Panc1 (cell line): ENCODE measurements at regions of chr3 and their contacts with region 1.

Region 1: DNA sequence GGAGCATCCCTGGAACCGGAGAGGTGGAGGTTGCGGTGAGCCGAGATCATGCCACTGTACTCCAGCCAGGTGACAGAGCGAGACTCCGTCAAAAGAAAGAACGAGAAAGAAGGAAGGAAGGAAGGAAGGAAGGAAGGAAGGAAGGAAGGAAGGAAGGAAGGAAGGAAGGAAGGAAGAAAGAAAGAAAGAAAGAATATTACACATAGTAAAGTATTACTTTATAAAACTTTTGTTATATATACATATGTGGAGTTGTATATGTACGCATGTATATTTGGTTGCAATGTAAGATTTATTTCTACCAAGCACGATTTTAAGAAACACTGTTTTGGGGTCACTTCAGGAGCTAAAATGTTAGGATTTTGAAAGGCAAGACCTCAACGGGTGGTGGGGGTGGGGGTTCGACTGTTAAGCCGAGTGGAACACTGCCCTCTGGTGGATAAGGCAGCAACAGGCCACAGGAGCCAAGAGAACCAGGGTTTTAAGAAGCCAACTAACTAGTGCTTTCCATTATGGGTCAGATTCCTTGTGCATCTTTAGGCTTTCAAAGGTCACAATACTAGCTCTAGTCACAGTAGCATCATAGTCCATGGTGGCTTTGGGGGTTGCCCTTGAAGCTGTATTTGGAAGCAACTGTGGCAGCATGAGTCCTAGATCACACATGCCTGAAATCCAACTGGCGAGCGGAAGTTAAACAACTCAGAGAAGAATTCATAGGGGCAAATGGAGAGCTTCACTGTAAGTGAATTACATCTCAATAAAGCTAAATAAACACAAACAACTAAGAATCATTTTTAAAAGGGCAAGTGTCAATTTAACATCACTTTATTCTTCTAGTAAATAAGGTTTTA is 22.5 kb downstream of the GLB1 start:
- DNase-seq: peak; percentile 51
- ATAC-seq: peak; percentile 88
- H3K4me3 ChIP-seq: no peak overlapping the region
- H3K27ac ChIP-seq: no peak overlapping the region
- H3K4me1 ChIP-seq: no peaks in the 10 kb centered on the region
- H3K27me3 ChIP-seq: no peaks in the 10 kb centered on the region
- CTCF ChIP-seq: peak; percentile 88

Region 2: GRCh38 chr3:33093847-33094246 is 19.4 kb after region 1 on chr3:
- CTCF ChIA-PET with region 1: interaction called, 11 read pairs
- POLR2A ChIA-PET with region 1: interaction called, 3 read pairs
- in situ Hi-C with region 1: no loop called
- intact Hi-C with region 1: no loop called
- DNase-seq: no peak
- ATAC-seq: no peak
- H3K4me3 ChIP-seq: no peak overlapping the region
- H3K27ac ChIP-seq: no peak overlapping the region
- H3K4me1 ChIP-seq: peaks cover 3% of the 10 kb centered on the region; the same call in 1 of the 2 replicates
- H3K27me3 ChIP-seq: no peaks in the 10 kb centered on the region
- CTCF ChIP-seq: no peak